Right cardiac atrium (tissue), 5 donors: ENCODE measurements at regions of chr5 and their contacts with region 1.

Region 1: GRCh38 chr5:55232985-55233928 is at the start of gene CCNO:
- DNase-seq: peak; percentile 75 to 88 (median 86)
- ATAC-seq: peak; percentile 95
- H3K4me3 ChIP-seq: peak within 1 kb of the TSS; percentile 47
- H3K27ac ChIP-seq: no peak within 1 kb of the TSS
- H3K4me1 ChIP-seq: peaks cover 14% of the 10 kb centered on the region
- H3K27me3 ChIP-seq: no peaks in the 10 kb centered on the region
- total RNA-seq, gene CCNO: 0.14 TPM in 1 of 4 donors, not detected in the others

Region 2: DNA sequence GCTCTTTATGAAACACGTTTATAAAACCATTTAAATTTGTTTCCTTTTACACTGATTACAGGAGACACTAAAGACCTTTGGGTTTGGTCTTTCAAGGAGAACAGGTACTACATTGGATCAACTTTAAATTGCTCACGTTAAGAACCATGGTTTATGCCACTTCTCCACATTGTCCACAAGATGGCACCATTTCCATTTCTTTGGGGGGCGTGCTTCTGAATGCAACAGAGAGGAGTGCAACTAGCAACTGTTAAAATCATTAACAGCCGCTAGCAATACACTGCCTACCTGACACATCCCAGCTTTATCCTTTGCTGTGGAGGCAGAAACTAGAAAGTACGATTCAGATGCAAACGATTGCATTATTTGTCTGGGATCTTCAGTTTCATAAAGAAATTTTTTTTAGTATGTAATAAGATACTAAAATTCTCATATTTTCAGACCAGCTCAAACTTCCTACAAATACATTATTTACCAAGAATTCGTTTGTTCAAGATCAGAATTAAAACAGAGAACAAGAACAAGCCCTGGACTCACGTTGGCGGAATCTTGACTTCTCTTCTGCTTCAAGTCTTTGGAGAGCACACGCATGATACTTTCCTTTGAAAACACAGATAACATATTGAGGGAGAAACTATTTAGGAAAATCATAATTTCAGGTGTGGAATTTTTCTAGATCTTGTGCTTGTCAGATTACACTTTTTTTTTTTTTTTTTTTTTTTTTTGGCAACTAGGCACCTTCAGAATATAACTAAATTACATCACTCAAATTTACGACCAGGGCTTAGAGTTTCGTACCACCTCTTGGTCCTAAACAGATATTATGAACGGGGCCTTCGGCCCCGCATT is 61.0 kb before region 1 on chr5:
- intact Hi-C with region 1: loop called in 1 of 4 experiments (anchors 10 kb)
- DNase-seq: no peak
- ATAC-seq: peak; percentile 79 to 87
- H3K4me3 ChIP-seq: peak overlapping the region; percentile 60
- H3K27ac ChIP-seq: no peak overlapping the region
- H3K4me1 ChIP-seq: no peaks in the 10 kb centered on the region
- H3K27me3 ChIP-seq: no peaks in the 10 kb centered on the region